WTC11 (cell line): ENCODE measurements at regions of chr5 and their contacts with region 1.

Region 1: GRCh38 chr5:134586866-134587524 is 45.6 kb downstream of the SAR1B start:
- DNase-seq: peak; percentile 95
- ATAC-seq: peak; percentile 89
- H3K4me3 Mint-ChIP-seq: peak overlapping the region; percentile 22
- H3K27ac Mint-ChIP-seq: peak overlapping the region; percentile 93
- H3K4me1 Mint-ChIP-seq: peaks cover 17% of the 10 kb centered on the region
- H3K27me3 Mint-ChIP-seq: no peaks in the 10 kb centered on the region
- CTCF ChIP-seq: peak; percentile 76

Region 2: DNA sequence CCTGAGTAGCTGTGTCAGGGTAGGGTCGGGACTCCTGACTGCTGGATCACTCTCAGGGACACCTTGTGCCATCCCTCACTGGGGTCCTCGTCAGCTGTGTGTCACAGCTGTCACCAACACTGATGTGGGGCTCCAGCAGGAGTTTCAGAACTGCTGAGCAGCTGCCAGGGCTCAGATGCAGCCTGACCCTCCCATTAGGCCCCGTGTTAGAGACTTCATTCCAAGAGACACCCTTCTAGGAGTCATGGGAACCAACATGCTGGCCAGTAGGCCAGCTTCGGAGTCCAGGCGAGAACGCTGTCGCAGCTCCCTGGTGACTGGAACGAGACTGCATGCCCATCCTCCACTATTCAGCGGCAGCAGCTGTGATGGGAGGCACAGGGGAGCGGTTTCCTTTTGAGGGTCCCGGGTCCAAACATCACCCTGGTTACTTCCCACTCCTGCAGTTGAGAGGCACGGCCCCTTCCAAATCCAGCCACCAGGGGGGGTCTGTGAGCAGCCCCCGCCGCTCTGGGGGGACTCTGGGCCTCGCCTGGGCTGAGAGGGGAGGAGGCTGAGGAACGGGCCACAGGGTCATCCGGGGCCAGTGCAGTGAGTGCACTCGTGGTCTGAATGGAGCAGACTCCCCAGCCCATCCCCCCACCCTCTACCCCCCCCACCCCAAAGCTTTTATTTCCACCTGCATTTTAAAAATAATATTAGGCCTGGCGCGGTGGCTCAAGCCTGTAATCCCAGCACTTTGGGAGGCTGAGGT is 485.1 kb before region 1 on chr5:
- CTCF ChIA-PET with region 1: interaction called, 10 read pairs
- POLR2A ChIA-PET with region 1: no interaction called
- DNase-seq: peak; percentile 87
- ATAC-seq: peak; percentile 73
- H3K4me3 Mint-ChIP-seq: no peak overlapping the region; the same call in 1 of the 2 replicates
- H3K27ac Mint-ChIP-seq: no peak overlapping the region
- H3K4me1 Mint-ChIP-seq: peaks cover 48% of the 10 kb centered on the region
- H3K27me3 Mint-ChIP-seq: peaks cover 52% of the 10 kb centered on the region
- CTCF ChIP-seq: peak; percentile 85

Region 3: DNA sequence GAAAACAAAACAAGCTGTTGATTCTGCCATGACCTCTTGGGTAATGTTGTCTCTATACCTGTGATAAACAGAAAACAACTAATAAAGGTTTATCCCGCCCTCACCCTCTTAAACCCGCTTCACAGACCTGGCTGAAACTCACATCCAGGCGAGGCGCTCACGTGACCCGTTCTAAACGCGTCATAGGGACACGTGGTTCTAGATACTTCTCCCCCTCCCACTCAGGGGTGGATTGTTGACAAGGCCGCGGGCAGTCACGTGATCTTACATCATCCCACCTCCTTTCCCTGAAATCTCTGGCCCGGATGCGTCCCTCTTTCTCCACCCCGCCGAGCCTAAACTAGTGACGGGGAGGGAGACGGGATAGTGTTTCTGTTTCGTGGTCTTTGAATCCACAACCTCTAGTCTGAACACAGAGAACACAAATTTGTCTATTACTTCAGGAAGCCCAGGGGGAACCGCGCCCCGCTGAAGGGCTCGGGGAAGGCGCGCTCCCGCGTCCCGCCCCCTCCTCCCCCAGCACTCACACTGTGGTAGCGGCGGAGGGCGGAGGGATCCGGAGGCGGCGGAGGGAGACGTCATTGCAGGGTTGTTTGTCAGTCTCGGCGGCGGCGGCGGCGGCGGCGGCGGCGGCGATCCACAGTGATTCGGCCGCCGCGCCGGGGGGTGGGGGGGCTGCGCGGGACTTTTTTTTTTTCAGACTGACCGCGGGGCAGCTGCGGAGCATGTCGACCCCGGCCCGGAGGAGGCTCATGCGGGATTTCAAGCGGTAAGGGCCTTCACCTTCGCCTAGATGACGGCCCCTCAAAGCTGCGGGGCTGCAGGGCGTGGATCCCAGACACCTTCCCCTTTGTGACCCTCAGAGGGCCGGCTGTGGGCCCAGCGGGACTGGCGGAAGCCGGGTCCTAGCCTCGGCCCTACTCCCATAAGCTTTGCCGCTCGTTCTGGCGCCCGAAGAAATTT is 215.8 kb before region 1 on chr5 and contains the start of gene UBE2B:
- CTCF ChIA-PET with region 1: interaction called, 15 read pairs
- POLR2A ChIA-PET with region 1: interaction called, 8 read pairs
- DNase-seq: peak; percentile 95
- ATAC-seq: peak; percentile 66
- H3K4me3 Mint-ChIP-seq: peak within 1 kb of the TSS; percentile 96
- H3K27ac Mint-ChIP-seq: peak within 1 kb of the TSS; percentile 100
- H3K4me1 Mint-ChIP-seq: peaks cover 31% of the 10 kb centered on the region
- H3K27me3 Mint-ChIP-seq: peaks cover 4% of the 10 kb centered on the region; the same call in 1 of the 2 replicates
- CTCF ChIP-seq: no peak
- total RNA-seq, gene UBE2B: 34.6 to 39.7 TPM (median 39.2 TPM) in 3 replicates

Region 4: GRCh38 chr5:134411546-134412266 is 175.3 kb before region 1 on chr5 and contains the start of gene CDKN2AIPNL:
- CTCF ChIA-PET with region 1: interaction called, 23 read pairs
- POLR2A ChIA-PET with region 1: interaction called, 5 read pairs
- DNase-seq: peak; percentile 92
- ATAC-seq: peak; percentile 98
- H3K4me3 Mint-ChIP-seq: peak within 1 kb of the TSS; percentile 97
- H3K27ac Mint-ChIP-seq: peak within 1 kb of the TSS; percentile 76
- H3K4me1 Mint-ChIP-seq: peaks cover 42% of the 10 kb centered on the region
- H3K27me3 Mint-ChIP-seq: no peaks in the 10 kb centered on the region
- CTCF ChIP-seq: no peak
- total RNA-seq, gene CDKN2AIPNL: 54.3 to 60.7 TPM (median 59.8 TPM) in 3 replicates

Region 5: GRCh38 chr5:134527146-134527960 is 59.6 kb before region 1 on chr5:
- CTCF ChIA-PET with region 1: interaction called, 37 read pairs
- POLR2A ChIA-PET with region 1: interaction called, 4 read pairs
- DNase-seq: peak; percentile 94
- ATAC-seq: peak; percentile 66
- H3K4me3 Mint-ChIP-seq: peak overlapping the region; percentile 85
- H3K27ac Mint-ChIP-seq: peak overlapping the region; percentile 97
- H3K4me1 Mint-ChIP-seq: peaks cover 52% of the 10 kb centered on the region
- H3K27me3 Mint-ChIP-seq: no peaks in the 10 kb centered on the region
- CTCF ChIP-seq: peak; percentile 74

Region 6: DNA sequence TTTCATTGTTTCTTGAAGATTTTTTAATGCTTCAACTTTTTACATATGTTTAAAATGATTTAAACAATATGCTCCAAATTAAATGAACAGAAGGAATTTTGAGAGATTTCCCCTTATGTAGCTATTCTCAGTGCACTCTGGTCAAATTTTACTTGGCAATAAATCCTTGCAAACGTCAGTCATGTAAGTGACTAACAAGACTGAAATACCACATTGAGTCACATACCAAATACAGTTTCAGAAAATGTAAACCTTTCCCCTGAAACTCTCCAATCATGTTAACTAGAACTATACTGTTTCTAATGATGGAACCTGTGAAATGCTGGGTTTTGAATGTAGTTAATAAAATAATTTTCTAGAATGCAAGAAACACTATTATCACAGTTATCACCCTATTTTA is 16.1 kb after region 1 on chr5:
- CTCF ChIA-PET with region 1: interaction called, 35 read pairs
- POLR2A ChIA-PET with region 1: no interaction called
- DNase-seq: no peak
- ATAC-seq: no peak
- H3K4me3 Mint-ChIP-seq: no peak overlapping the region
- H3K27ac Mint-ChIP-seq: no peak overlapping the region
- H3K4me1 Mint-ChIP-seq: no peaks in the 10 kb centered on the region
- H3K27me3 Mint-ChIP-seq: no peaks in the 10 kb centered on the region
- CTCF ChIP-seq: no peak

Region 7: DNA sequence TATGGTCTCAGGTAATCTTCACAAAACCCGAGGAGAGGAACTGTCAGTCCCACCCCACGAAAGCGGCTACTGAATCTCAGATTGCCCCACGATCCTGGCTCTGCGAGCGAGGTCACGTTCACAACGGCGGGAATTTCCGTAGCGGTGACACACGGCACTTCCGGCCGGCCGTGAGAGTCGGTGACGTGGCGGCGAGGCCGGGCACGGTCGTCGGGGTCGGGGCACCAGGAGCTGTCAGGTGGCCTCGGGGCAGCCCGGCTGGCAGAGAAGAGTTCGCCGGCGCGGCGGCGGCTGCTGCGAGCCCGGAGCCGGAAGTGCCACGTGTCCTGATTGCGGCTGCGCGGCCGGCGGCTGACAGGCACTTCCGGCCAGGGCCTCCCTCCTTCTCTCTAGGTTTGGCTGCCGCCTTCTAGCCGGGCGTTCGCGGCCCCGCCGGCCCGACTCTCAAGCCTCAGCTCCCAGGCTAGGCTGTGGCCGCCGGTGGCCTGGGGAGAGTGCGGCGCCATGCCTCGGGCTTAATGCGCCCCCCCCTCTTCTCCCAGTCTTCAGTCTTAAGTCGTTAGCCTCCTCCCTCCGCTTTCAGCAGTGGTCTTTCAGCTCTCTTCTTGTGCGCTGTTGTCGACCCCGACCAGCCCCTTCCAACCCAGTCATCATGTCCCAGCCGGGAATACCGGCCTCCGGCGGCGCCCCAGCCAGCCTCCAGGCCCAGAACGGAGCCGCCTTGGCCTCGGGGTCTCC is 61.6 kb after region 1 on chr5 and contains the start of gene SEC24A:
- CTCF ChIA-PET with region 1: interaction called, 22 read pairs
- POLR2A ChIA-PET with region 1: interaction called, 7 read pairs
- DNase-seq: peak; percentile 90
- ATAC-seq: peak; percentile 91
- H3K4me3 Mint-ChIP-seq: peak within 1 kb of the TSS; percentile 88
- H3K27ac Mint-ChIP-seq: peak within 1 kb of the TSS; percentile 99
- H3K4me1 Mint-ChIP-seq: peaks cover 14% of the 10 kb centered on the region
- H3K27me3 Mint-ChIP-seq: no peaks in the 10 kb centered on the region
- CTCF ChIP-seq: no peak
- total RNA-seq, gene SEC24A: 25.0 to 30.5 TPM (median 27.5 TPM) in 3 replicates

Region 8: GRCh38 chr5:134794082-134794481 is 207.1 kb after region 1 on chr5:
- CTCF ChIA-PET with region 1: no interaction called
- POLR2A ChIA-PET with region 1: no interaction called
- DNase-seq: no peak
- ATAC-seq: no peak
- H3K4me3 Mint-ChIP-seq: no peak overlapping the region
- H3K27ac Mint-ChIP-seq: no peak overlapping the region
- H3K4me1 Mint-ChIP-seq: no peaks in the 10 kb centered on the region
- H3K27me3 Mint-ChIP-seq: no peaks in the 10 kb centered on the region
- CTCF ChIP-seq: no peak